ENCODE measurements at regions of chr15 and their contacts with region 1.

Region 1: DNA sequence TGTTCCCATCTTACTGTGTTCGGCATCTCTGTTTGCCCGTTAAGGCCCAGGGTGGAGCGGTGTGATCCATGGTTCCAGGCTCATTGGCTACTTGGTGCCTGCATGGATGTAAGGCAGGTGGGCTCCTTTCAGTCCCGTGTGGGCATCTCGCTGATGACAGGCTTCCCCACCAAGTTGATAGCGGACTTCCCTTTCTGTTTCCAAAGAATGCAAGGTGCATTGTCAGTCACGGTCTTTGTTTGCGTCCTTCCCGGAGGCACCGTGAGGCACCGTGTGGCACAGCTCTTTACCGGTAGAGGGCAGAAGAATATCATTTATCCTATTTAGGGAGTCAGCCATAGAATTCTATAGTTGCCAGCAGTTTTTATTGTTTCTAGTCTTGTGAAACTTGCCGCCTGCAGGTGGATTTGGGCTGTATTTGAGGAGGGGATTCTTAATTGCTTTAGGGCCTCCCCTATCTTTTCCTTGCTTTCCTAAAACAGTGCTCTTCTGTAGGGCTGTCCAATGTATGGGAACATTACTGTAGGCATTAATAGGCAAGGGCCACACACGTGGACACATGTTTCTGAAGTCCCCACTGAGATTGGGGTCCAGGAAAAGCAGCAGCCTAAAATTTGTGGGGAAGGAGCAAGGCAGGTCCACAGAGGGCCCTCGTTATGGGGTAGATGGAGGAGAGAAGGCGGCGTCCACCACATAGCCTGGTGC is 244.1 kb downstream of the SLCO3A1 start:
- DNase-seq: peak; percentile 77
- H3K4me3 ChIP-seq: no peak overlapping the region
- H3K27ac ChIP-seq: no peak overlapping the region
- H3K4me1 ChIP-seq: no peaks in the 10 kb centered on the region
- H3K27me3 ChIP-seq: no peaks in the 10 kb centered on the region

Region 2: DNA sequence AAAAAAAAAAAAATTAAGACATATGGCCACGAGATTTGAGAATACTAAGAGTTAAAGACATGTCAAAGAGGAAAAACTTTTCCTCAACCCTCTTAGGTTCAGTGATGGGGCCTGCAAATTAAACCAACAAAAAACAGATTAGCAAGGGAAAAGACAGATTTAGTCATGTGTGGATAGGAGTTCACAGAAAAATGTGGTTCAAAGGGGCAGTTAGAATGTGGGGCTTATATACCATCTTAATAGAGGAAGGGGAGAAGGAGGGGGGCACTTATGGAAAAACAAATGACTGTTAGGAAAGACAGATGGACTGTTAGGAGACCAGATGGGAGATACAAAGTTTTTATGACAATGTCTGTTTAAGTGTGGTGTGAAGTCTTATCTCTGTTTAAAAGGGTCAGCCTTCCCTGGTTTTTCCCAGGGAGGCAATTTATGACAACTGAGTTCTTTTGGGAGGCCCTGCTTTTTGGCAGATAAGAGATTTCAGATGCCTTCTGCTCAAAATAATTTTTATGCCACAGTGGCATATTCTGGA is 1297.9 kb before region 1 on chr15:
- in situ Hi-C with region 1: no loop called
- DNase-seq: no peak
- H3K4me3 ChIP-seq: no peak overlapping the region
- H3K27ac ChIP-seq: no peak overlapping the region
- H3K4me1 ChIP-seq: no peaks in the 10 kb centered on the region
- H3K27me3 ChIP-seq: no peaks in the 10 kb centered on the region

Region 3: DNA sequence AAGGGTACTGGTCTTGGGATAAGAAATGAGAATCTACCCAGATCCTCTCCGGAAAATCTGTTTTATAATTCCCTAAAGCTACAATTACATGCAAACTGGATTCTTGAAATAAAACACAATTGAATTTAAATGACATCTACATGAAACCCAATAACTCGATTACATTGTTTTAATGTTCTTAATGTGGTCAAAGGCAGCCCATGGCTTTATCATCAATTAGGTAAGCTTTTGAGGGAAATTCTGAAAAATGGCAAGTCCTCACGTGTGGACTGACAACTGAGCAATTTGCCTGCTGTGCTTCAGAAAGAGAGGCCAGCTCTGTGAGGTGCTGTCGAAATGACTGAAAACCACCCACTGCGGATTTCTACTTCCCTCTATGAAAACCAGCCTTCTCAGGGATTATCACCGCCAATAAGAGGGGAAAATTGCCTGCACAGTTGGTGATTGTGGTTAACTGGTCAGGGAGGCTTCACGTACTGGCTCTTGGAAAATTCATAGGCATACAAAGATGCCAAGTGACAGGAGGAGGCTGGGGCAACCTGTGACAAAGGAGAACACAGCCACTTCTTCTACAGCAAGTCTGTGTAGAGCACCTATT is 444.9 kb before region 1 on chr15:
- in situ Hi-C with region 1: no loop called
- DNase-seq: no peak
- H3K4me3 ChIP-seq: no peak overlapping the region
- H3K27ac ChIP-seq: no peak overlapping the region
- H3K4me1 ChIP-seq: no peaks in the 10 kb centered on the region
- H3K27me3 ChIP-seq: no peaks in the 10 kb centered on the region

Region 4: GRCh38 chr15:92226014-92226612 is 128.5 kb after region 1 on chr15:
- in situ Hi-C with region 1: loop called (anchors 10 kb)
- DNase-seq: peak; percentile 49
- H3K4me3 ChIP-seq: no peak overlapping the region
- H3K27ac ChIP-seq: no peak overlapping the region
- H3K4me1 ChIP-seq: no peaks in the 10 kb centered on the region
- H3K27me3 ChIP-seq: no peaks in the 10 kb centered on the region